CD8-positive, alpha-beta memory T cell (primary cell): ENCODE measurements at regions of chr9 and their contacts with region 1.

Region 1: GRCh38 chr9:129383561-129384416 is 205.7 kb upstream of the IER5L start:
- DNase-seq: peak; percentile 47 to 85 (median 77)
- H3K4me3 ChIP-seq: peak overlapping the region; percentile 74
- H3K4me3 Mint-ChIP-seq: peak overlapping the region; percentile 78 to 91 (median 79)
- H3K27ac ChIP-seq: peak overlapping the region; percentile 38
- H3K27ac Mint-ChIP-seq: peak overlapping the region; percentile 86 to 97 (median 93)
- H3K4me1 ChIP-seq: peaks cover 14% of the 10 kb centered on the region
- H3K4me1 Mint-ChIP-seq: peaks cover 7 to 20% (median 9%) of the 10 kb centered on the region in 3 donors
- H3K27me3 ChIP-seq: no peaks in the 10 kb centered on the region
- H3K27me3 Mint-ChIP-seq: no peaks in the 10 kb centered on the region

Region 2: GRCh38 chr9:129328377-129329028 is 55.3 kb before region 1 on chr9:
- CTCF ChIA-PET with region 1: no interaction called
- POLR2A ChIA-PET with region 1: no interaction called
- DNase-seq: peak in 1 of 5 donors; percentile 33
- H3K4me3 ChIP-seq: no peak overlapping the region
- H3K4me3 Mint-ChIP-seq: no peak overlapping the region
- H3K27ac ChIP-seq: no peak overlapping the region
- H3K27ac Mint-ChIP-seq: no peak overlapping the region
- H3K4me1 ChIP-seq: peaks cover 16% of the 10 kb centered on the region
- H3K4me1 Mint-ChIP-seq: peaks cover 0 to 11% (median 4%) of the 10 kb centered on the region in 3 donors
- H3K27me3 ChIP-seq: no peaks in the 10 kb centered on the region
- H3K27me3 Mint-ChIP-seq: no peaks in the 10 kb centered on the region

Region 3: GRCh38 chr9:129436751-129437625 is 53.2 kb after region 1 on chr9:
- CTCF ChIA-PET with region 1: no interaction called
- POLR2A ChIA-PET with region 1: interaction called, 13 read pairs
- DNase-seq: peak in 4 of 5 donors; percentile 8 to 67 (median 40)
- H3K4me3 ChIP-seq: peak overlapping the region; percentile 50
- H3K4me3 Mint-ChIP-seq: peak overlapping the region; percentile 74 to 90 (median 86)
- H3K27ac ChIP-seq: no peak overlapping the region
- H3K27ac Mint-ChIP-seq: peak overlapping the region in 7 of 8 donors; percentile 3 to 92 (median 85)
- H3K4me1 ChIP-seq: peaks cover 19% of the 10 kb centered on the region
- H3K4me1 Mint-ChIP-seq: peaks cover 21 to 38% (median 25%) of the 10 kb centered on the region in 3 donors
- H3K27me3 ChIP-seq: peaks cover 29% of the 10 kb centered on the region
- H3K27me3 Mint-ChIP-seq: peaks cover 43 to 49% of the 10 kb centered on the region in 2 donors